ENCODE measurements at regions of chr10 and their contacts with region 1.

Region 1: GRCh38 chr10:62268399-62269114 is at the start of gene RTKN2:
- DNase-seq: peak; percentile 83
- H3K4me3 Mint-ChIP-seq: peak within 1 kb of the TSS; percentile 80
- H3K27ac Mint-ChIP-seq: no peak within 1 kb of the TSS
- H3K4me1 Mint-ChIP-seq: peaks cover 28% of the 10 kb centered on the region
- H3K27me3 Mint-ChIP-seq: peaks cover 7% of the 10 kb centered on the region
- total RNA-seq, gene RTKN2: 5.1 to 5.9 TPM

Region 2: GRCh38 chr10:62317257-62317656 is 48.7 kb after region 1 on chr10:
- CTCF ChIA-PET with region 1: no interaction called
- POLR2A ChIA-PET with region 1: no interaction called
- intact Hi-C with region 1: no loop called
- DNase-seq: no peak
- H3K4me3 Mint-ChIP-seq: no peak overlapping the region
- H3K27ac Mint-ChIP-seq: no peak overlapping the region
- H3K4me1 Mint-ChIP-seq: no peaks in the 10 kb centered on the region
- H3K27me3 Mint-ChIP-seq: peaks cover 4% of the 10 kb centered on the region

Region 3: DNA sequence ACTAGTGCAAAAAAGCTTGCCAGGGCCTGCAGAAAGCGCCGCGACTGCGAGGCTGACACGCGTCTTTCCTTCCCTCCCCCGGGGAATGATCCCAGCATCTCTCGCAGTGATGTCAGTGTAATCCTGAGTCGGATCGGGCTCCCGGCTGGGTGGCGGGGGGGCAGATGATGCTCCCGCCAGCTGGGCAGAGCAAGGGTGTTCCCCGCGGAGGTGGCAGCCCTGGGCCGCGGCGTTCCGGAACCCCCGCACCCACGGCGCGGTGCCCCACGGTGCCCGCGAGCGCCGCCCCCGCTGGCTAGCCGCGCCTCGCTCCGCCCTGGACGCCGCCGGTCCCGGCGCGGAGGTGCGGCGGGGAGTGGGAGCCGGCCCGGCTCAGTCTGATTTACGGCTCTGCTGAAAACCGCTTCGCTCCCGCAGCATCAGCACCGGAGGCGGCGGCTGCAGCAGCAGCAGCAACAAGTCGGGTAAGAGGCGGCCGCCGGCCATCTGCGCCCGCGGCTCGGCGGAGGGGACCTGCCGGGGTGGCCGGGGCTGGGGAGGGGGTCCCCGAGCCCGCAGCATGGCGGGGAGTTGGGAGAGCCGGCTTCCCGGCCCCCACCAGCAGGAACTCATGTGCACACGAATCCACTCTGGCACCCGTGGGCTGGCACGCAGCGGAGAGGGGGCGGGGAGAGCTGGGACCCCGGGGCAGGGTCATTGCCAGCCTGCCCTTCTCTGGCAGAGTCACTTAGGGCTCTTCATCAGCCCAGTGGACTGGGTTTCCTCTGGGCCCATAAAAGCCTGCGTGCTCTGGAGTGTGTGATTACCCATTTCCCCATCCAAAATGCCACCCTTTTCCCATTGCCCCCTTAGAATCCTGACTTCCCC is 105.7 kb after region 1 on chr10 and contains the start of gene ZNF365:
- CTCF ChIA-PET with region 1: no interaction called
- POLR2A ChIA-PET with region 1: no interaction called
- intact Hi-C with region 1: loop called (anchors 2 kb)
- DNase-seq: peak; percentile 69
- H3K4me3 Mint-ChIP-seq: peak within 1 kb of the TSS; percentile 75
- H3K27ac Mint-ChIP-seq: peak within 1 kb of the TSS; percentile 49
- H3K4me1 Mint-ChIP-seq: peaks cover 15% of the 10 kb centered on the region
- H3K27me3 Mint-ChIP-seq: peaks cover 15% of the 10 kb centered on the region
- total RNA-seq, gene ZNF365: 1.2 to 1.4 TPM

Region 4: DNA sequence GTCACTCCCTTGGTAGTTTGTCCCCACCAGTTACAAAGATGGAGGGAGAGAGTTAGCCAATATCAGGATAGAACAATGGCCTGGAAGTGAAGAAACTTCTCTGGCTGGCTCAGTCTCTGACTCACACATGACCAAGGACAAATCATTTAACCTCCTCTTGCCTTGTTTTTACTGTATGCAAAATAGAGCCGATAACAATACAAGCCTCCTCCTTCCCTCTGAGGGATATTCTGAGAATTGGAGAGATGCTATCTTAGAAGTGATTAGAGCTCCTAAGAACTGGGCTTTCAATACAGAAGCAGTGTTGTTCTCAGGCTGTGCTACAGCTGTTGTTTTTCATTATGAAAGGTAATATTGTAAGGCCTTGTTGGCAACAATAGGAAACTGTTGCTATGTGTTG is 635.3 kb after region 1 on chr10:
- CTCF ChIA-PET with region 1: no interaction called
- POLR2A ChIA-PET with region 1: no interaction called
- intact Hi-C with region 1: no loop called
- DNase-seq: no peak
- H3K4me3 Mint-ChIP-seq: no peak overlapping the region
- H3K27ac Mint-ChIP-seq: no peak overlapping the region
- H3K4me1 Mint-ChIP-seq: peaks cover 6% of the 10 kb centered on the region
- H3K27me3 Mint-ChIP-seq: peaks cover 5% of the 10 kb centered on the region

Measured in activated CD4-positive, alpha-beta memory T cell treated with anti-CD3 and anti-CD28 coated beads for 36 hours (primary cell).